HepG2 (cell line): ENCODE measurements at regions of chr20 and their contacts with region 1.

Region 1: DNA sequence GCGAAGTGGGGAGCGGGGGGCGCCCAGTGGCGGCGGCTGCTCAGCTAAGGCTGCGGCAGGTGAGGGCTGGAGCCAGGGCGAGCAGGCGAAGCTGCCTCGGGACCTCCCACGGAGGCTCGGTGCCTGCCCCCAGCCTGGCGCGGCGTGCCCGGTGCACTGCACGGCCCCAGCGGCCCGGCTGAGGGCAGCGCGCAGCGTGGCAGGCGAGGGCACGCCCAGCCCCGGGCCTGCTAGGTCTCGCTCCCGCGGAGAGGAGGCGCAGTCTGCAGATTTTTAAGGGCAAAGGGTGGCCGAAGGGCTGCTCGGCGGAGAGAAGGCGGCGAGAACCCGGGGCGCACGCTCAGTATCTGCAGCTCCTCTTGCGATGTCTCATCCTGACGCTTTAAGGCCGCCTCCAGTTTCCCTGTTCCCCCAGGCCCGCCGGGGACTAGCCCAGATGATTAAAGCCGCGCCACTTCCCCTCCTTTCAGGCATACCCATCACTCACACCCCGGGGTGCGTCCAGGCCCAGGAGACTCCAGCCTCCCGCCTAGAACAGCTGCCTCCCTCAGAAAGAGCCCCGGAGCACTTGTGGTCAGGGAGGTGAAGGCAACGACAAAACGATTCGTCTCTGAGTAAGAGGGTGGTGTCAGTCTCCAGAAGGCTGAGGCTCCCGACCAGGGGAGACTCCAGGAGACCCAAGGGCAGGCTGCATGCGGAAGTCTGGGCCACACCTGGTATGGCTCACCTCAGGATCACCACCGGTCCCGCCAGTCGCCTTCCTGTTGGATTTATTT is at the start of gene FERMT1:
- DNase-seq: peak; percentile 84
- ATAC-seq: peak; percentile 97
- H3K4me3 ChIP-seq: peak within 1 kb of the TSS; percentile 71 to 79 (median 74)
- H3K27ac ChIP-seq: peak within 1 kb of the TSS; percentile 76
- H3K4me1 ChIP-seq: peaks cover 26% of the 10 kb centered on the region
- H3K27me3 ChIP-seq: peaks cover 0 to 5% of the 10 kb centered on the region in 2 experiments; a peak in 1 of 5 replicates
- CTCF ChIP-seq: peak; percentile 66
- EP300 ChIP-seq: peak in 1 of 2 experiments; percentile 72; a peak in 2 of 4 replicates
- POLR2A ChIP-seq: peak; percentile 83 to 97
- RAD21 ChIP-seq: peak; percentile 82
- total RNA-seq, gene FERMT1: 29.5 and 39.1 TPM in 2 replicates

Region 2: DNA sequence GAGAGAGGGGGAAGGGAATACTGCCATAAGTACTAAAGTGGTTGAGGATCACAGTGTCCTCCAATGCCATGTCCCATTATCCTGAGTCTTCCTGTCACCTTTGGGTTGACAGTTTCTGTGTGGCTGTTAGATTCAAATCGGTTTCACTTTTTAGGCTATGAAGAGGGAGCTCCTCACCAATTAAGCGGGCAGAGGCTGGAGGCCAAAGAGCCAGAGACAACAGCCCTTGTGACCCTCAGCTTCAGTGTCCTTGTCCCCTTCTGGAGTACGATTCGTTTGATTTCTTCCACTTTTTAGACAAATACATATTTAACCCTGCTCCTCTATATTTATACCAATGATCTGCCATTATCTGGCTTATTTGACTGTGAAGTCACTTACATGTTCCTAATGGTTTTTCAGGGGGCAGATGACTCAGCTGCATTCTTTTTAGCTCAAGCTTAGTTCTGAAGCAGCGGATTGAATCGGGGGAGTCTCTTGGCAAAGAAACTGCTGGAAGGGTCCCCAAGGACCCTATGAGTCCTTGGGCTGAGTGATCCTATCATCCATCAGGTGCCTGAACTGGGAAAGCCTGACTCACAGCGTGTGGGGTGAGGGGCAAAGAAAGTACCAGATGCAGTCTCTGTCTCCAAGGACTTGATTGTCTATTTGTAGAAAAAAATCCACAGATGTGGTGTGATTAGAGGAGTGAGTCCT is 18.4 kb before region 1 on chr20:
- CTCF ChIA-PET with region 1: no interaction called
- POLR2A ChIA-PET with region 1: interaction called, 11 read pairs
- in situ Hi-C with region 1: no loop called
- intact Hi-C with region 1: no loop called
- DNase-seq: no peak
- ATAC-seq: no peak
- H3K4me3 ChIP-seq: no peak overlapping the region
- H3K27ac ChIP-seq: no peak overlapping the region
- H3K4me1 ChIP-seq: no peaks in the 10 kb centered on the region
- H3K27me3 ChIP-seq: no peaks in the 10 kb centered on the region
- CTCF ChIP-seq: no peak
- EP300 ChIP-seq: no peak
- POLR2A ChIP-seq: no peak
- RAD21 ChIP-seq: no peak

Region 3: GRCh38 chr20:6157345-6157744 is 34.3 kb after region 1 on chr20:
- CTCF ChIA-PET with region 1: no interaction called
- POLR2A ChIA-PET with region 1: no interaction called
- in situ Hi-C with region 1: no loop called
- intact Hi-C with region 1: no loop called
- DNase-seq: no peak
- ATAC-seq: peak; percentile 68
- H3K4me3 ChIP-seq: no peak overlapping the region
- H3K27ac ChIP-seq: no peak overlapping the region
- H3K4me1 ChIP-seq: no peaks in the 10 kb centered on the region
- H3K27me3 ChIP-seq: no peaks in the 10 kb centered on the region
- CTCF ChIP-seq: peak; percentile 51
- EP300 ChIP-seq: no peak
- POLR2A ChIP-seq: no peak
- RAD21 ChIP-seq: no peak

Region 4: GRCh38 chr20:6169251-6169650 is 46.2 kb after region 1 on chr20:
- CTCF ChIA-PET with region 1: no interaction called
- POLR2A ChIA-PET with region 1: no interaction called
- in situ Hi-C with region 1: no loop called
- intact Hi-C with region 1: no loop called
- DNase-seq: peak; percentile 15
- ATAC-seq: peak; percentile 86
- H3K4me3 ChIP-seq: no peak overlapping the region
- H3K27ac ChIP-seq: no peak overlapping the region
- H3K4me1 ChIP-seq: no peaks in the 10 kb centered on the region
- H3K27me3 ChIP-seq: peaks cover 1 to 2% of the 10 kb centered on the region in 2 experiments; a peak in 3 of 5 replicates
- CTCF ChIP-seq: peak; percentile 56
- EP300 ChIP-seq: no peak
- POLR2A ChIP-seq: no peak
- RAD21 ChIP-seq: no peak